Ascending aorta (tissue), 2 donors: ENCODE measurements at regions of chr3 and their contacts with region 1.

Region 1: GRCh38 chr3:192917404-192918274 is at the start of gene MB21D2:
- DNase-seq: peak in 1 of 2 donors; percentile 86
- H3K4me3 ChIP-seq: peak within 1 kb of the TSS; percentile 84 to 89
- H3K27ac ChIP-seq: peak within 1 kb of the TSS; percentile 87 to 93
- H3K4me1 ChIP-seq: peaks cover 0 to 12% of the 10 kb centered on the region in 2 donors
- H3K27me3 ChIP-seq: no peaks in the 10 kb centered on the region
- CTCF ChIP-seq: no peak
- total RNA-seq, gene MB21D2: 0.11 TPM

Region 2: GRCh38 chr3:192816351-192816750 is 101.3 kb before region 1 on chr3:
- intact Hi-C with region 1: loop called (anchors 1 kb)
- DNase-seq: no peak
- H3K4me3 ChIP-seq: no peak overlapping the region
- H3K27ac ChIP-seq: no peak overlapping the region
- H3K4me1 ChIP-seq: peaks cover 0 to 9% of the 10 kb centered on the region in 2 donors
- H3K27me3 ChIP-seq: no peaks in the 10 kb centered on the region
- CTCF ChIP-seq: peak; percentile 63 to 75 (median 66)

Region 3: GRCh38 chr3:192831111-192831644 is 86.5 kb before region 1 on chr3:
- intact Hi-C with region 1: loop called (anchors 1 kb)
- DNase-seq: no peak
- H3K4me3 ChIP-seq: no peak overlapping the region
- H3K27ac ChIP-seq: peak overlapping the region; percentile 43 to 61
- H3K4me1 ChIP-seq: peaks cover 12 to 18% of the 10 kb centered on the region in 2 donors
- H3K27me3 ChIP-seq: no peaks in the 10 kb centered on the region
- CTCF ChIP-seq: no peak

Region 4: DNA sequence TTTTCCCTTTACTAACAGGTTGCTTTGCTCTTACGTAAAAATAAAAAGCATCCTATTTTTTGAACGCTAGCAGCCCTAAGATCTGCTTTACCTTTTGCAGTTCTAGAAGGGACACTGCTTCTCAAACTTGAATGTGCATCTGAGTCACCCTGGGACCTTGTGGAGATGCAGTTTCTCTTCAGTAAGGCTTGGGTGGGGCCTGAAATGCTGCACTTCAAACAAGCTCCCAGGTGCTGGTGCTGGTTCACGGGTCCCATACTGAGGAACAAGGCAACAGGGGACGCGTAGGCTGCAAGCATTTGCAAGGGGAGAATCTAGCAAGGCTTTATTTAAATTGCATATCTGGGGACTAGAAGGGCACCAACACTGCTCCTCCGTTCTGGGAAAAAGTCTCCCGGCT is 29.9 kb before region 1 on chr3:
- intact Hi-C with region 1: loop called (anchors 2 kb)
- DNase-seq: no peak
- H3K4me3 ChIP-seq: no peak overlapping the region
- H3K27ac ChIP-seq: no peak overlapping the region
- H3K4me1 ChIP-seq: peaks cover 6 to 20% of the 10 kb centered on the region in 2 donors
- H3K27me3 ChIP-seq: no peaks in the 10 kb centered on the region
- CTCF ChIP-seq: no peak

Region 5: GRCh38 chr3:193592944-193593667 is 675.5 kb after region 1 on chr3 and contains the start of gene OPA1:
- intact Hi-C with region 1: loop called (anchors 10 kb)
- DNase-seq: peak; percentile 91 to 98
- H3K4me3 ChIP-seq: peak within 1 kb of the TSS; percentile 82 to 84
- H3K27ac ChIP-seq: peak within 1 kb of the TSS; percentile 77 to 88
- H3K4me1 ChIP-seq: peaks cover 4 to 10% of the 10 kb centered on the region in 2 donors
- H3K27me3 ChIP-seq: no peaks in the 10 kb centered on the region
- CTCF ChIP-seq: peak in 2 of 3 experiments; percentile 19 to 37
- total RNA-seq, gene OPA1: 19.5 TPM